ENCODE measurements at regions of chr2 and their contacts with region 1.

Region 1: GRCh38 chr2:63698825-63699548 is 110.2 kb downstream of the MDH1 start:
- DNase-seq: peak; percentile 70
- H3K4me3 ChIP-seq: no peak overlapping the region
- H3K27me3 ChIP-seq: no peaks in the 10 kb centered on the region
- CTCF ChIP-seq: peak; percentile 69

Region 2: DNA sequence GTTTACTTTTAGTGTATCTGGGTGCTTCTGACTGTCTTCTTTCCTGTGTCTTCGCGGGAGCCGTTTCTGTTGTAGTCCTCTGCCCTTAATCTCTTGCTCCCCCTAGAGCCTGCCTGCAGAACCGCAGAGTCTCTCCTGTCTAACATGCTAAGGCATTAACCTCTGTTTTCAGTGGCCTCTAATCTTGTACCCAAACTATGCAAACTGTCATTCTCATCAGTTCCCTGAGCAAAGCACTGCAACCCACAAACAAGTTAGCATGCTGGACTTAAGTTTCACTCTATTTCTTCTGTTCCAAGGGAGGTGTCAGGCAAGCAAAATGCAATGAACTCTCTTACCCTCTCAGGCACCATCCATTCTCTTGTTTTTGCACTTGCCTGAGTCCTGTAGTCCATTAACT is 510.0 kb before region 1 on chr2:
- CTCF ChIA-PET with region 1: no interaction called
- POLR2A ChIA-PET with region 1: no interaction called
- DNase-seq: no peak
- H3K4me3 ChIP-seq: no peak overlapping the region
- H3K27me3 ChIP-seq: no peaks in the 10 kb centered on the region; the same call in 1 of the 2 replicates
- CTCF ChIP-seq: peak; percentile 95

Region 3: DNA sequence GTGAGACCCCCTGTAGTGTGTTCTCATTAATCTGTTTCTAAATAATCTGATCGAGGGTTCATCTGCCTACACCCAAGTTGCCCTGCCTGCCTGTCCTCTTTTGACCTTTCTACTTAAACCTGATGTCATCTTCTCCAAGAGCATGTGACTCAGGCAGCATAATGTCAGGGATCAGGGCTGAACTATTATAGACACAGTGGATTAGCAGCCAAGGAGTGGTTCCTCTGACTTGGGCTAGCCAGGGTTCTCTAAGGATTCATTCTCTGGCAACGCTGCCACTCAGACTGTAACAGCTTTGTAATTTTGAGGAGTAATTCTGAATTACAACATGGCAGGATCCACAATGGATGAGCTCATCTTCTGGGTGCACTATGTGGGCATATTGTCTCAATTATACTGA is 13.8 kb after region 1 on chr2:
- CTCF ChIA-PET with region 1: interaction called, 16 read pairs
- POLR2A ChIA-PET with region 1: no interaction called
- DNase-seq: no peak
- H3K4me3 ChIP-seq: no peak overlapping the region
- H3K27me3 ChIP-seq: no peaks in the 10 kb centered on the region
- CTCF ChIP-seq: no peak

Region 4: GRCh38 chr2:63841254-63842022 is 142.5 kb after region 1 on chr2 and contains the start of gene UGP2:
- CTCF ChIA-PET with region 1: interaction called, 24 read pairs
- POLR2A ChIA-PET with region 1: interaction called, 10 read pairs
- DNase-seq: peak; percentile 84
- H3K4me3 ChIP-seq: peak within 1 kb of the TSS; percentile 61
- H3K27me3 ChIP-seq: no peaks in the 10 kb centered on the region
- CTCF ChIP-seq: peak; percentile 35; the same call in 1 of the 2 replicates
- polyA plus RNA-seq, gene UGP2: 53.6 and 139 TPM in 2 replicates

Region 5: DNA sequence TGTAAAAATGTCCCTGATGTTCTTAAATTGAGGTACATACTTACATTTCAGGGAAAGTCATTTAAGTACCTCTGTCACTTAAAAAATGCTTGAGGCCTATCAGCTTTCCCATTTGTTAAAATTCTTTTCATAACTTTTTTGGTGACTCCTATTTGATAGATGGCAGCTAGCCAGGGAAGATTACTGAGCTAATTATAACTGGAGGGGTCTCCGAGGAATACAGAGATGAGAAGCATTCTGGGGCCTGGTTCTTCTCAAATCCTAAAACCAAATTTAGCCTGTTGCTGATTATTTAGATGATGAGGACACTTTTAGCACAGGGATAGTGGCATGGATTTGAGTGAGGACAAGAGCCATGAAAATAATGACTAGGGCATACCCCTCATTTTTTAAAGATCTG is 147.5 kb after region 1 on chr2:
- CTCF ChIA-PET with region 1: interaction called, 24 read pairs
- POLR2A ChIA-PET with region 1: interaction called, 10 read pairs
- DNase-seq: no peak
- H3K4me3 ChIP-seq: no peak overlapping the region
- H3K27me3 ChIP-seq: no peaks in the 10 kb centered on the region
- CTCF ChIP-seq: no peak

Region 6: GRCh38 chr2:63853527-63854310 is 154.7 kb after region 1 on chr2:
- CTCF ChIA-PET with region 1: interaction called, 59 read pairs
- POLR2A ChIA-PET with region 1: no interaction called
- DNase-seq: no peak
- H3K4me3 ChIP-seq: no peak overlapping the region
- H3K27me3 ChIP-seq: no peaks in the 10 kb centered on the region
- CTCF ChIP-seq: no peak

Region 7: DNA sequence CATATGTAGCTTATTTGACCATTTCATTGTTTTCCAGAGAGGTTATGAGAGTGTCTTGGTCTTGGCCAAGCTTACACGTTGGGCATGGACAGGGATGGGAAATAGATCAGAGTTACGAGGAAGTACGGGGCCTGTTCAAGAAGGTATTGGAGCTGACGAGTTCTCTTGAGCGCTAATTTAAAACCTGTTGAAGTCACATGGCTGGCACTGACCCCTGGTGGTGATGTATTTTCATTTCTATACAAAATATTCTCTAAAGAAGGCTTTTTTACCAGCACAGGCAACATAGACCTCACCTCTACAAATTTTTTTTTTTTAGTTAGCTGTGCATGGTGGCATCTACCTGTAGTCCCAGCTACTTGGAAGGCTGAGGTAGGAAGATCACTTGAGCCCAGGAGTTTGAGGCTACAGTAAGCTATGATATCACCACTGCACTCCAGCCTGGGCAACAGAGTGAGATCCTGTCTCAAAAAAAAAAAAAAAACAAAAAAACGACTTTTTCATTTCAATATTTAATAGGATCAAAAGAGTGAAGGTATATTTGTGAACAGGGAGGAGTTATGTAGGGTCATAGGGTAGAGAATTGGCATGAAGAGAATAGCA is 162.3 kb after region 1 on chr2:
- CTCF ChIA-PET with region 1: interaction called, 59 read pairs
- POLR2A ChIA-PET with region 1: no interaction called
- DNase-seq: no peak
- H3K4me3 ChIP-seq: no peak overlapping the region
- H3K27me3 ChIP-seq: no peaks in the 10 kb centered on the region
- CTCF ChIP-seq: peak; percentile 53

Region 8: DNA sequence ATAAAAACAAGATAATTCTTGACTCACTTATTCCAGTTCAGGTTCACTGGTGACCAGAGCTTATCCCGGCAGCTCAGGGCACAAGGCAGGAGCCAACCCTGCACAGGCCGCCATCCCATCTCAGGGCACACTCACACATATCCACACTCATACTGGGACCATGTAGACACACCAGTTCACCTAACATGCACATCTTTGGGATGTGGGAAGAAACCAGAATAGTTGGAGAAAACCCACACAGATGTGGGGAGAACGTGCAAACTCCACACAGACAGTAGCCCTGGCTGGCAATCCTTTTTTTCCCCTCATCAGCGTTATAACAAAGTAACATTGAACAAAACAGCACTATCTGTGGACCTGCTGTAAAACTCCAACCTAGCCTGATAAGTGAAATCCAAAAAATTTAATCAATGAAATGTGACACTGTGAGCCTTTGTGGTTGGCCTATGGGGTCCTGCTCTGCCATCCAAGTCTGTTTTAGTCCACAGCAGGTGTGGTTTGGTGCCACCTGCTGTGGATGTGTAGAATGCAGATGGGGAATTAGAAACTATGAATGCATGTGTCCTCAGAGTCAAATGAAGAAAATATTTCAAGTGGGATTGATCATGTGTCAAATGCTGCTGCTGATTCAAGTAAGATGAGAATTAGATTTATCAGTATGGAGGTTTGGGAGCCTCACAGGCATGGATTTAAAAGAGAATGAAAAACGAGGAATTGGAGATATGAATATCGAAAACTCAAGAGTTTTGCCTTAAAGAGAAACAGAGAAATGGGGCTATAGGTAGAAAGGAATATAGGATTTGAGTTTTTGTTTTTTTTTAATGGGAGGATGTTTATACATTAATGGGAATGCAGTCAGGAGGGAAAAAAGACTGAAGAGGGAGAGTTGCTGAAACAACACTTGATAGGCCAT is 189.8 kb after region 1 on chr2:
- CTCF ChIA-PET with region 1: interaction called, 12 read pairs
- POLR2A ChIA-PET with region 1: no interaction called
- DNase-seq: no peak
- H3K4me3 ChIP-seq: no peak overlapping the region
- H3K27me3 ChIP-seq: no peaks in the 10 kb centered on the region
- CTCF ChIP-seq: peak; percentile 79